ENCODE measurements at regions of chr3 and their contacts with region 1.

Region 1: DNA sequence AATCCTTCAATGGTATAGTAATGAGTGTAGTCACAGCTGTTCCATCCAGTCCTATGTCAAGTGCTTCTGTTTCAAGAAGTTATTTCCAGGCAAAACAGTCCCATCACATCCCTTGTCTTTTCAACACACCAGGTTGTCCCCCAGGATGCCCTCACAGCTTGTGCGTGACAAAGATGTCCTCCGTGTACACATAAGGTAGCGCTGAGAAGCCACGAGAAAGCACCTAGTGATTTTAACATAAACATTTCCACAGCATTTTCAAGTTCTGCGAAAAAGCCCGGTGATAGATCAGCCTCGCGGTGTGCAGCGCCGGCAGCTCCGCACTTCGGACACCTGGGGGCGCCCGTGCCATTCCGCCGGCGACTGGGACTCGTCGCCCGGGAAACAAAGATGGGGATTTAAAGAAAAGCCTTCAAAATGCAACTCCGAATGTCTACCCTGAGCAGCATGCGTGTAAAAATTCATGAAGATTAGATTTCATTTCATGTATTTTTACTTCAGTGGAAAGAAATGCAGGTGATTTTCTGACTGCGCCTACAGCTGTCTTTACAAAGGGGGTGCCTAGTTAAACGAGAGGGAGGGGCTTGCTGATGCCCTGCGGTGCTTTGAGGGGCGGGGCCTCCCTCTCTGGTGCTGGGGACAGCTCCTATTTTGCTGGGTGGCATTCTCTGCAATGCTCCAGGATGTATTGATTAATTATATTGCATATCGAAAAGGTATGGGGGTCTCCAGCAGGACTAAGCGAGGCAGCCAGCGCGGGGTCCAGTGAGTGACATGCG is 49.9 kb downstream of the KY start:
- DNase-seq: peak; percentile 28
- ATAC-seq: peak; percentile 94
- H3K4me3 ChIP-seq: no peak overlapping the region
- H3K27ac ChIP-seq: no peak overlapping the region
- H3K4me1 ChIP-seq: peaks cover 0 to 5% of the 10 kb centered on the region in 2 experiments; a peak in 1 of 4 replicates
- H3K27me3 ChIP-seq: peaks cover 11% of the 10 kb centered on the region; the same call in 1 of the 2 replicates
- CTCF ChIP-seq: peak; percentile 89 to 98 (median 93)
- POLR2A ChIP-seq: no peak
- RAD21 ChIP-seq: peak; percentile 94

Region 2: GRCh38 chr3:134677196-134677986 is 76.5 kb after region 1 on chr3:
- CTCF ChIA-PET with region 1: no interaction called
- POLR2A ChIA-PET with region 1: no interaction called
- RAD21 ChIA-PET with region 1: no interaction called
- intact Hi-C with region 1: loop called (anchors 1 kb)
- DNase-seq: peak; percentile 16
- ATAC-seq: peak; percentile 99
- H3K4me3 ChIP-seq: no peak overlapping the region
- H3K27ac ChIP-seq: no peak overlapping the region
- H3K4me1 ChIP-seq: no peaks in the 10 kb centered on the region
- H3K27me3 ChIP-seq: peaks cover 10% of the 10 kb centered on the region; the same call in 1 of the 2 replicates
- CTCF ChIP-seq: peak; percentile 84 to 94 (median 85)
- POLR2A ChIP-seq: no peak
- RAD21 ChIP-seq: peak; percentile 65

Region 3: GRCh38 chr3:134709561-134710312 is 108.9 kb after region 1 on chr3:
- CTCF ChIA-PET with region 1: no interaction called
- POLR2A ChIA-PET with region 1: no interaction called
- RAD21 ChIA-PET with region 1: no interaction called
- intact Hi-C with region 1: no loop called
- DNase-seq: no peak
- ATAC-seq: no peak
- H3K4me3 ChIP-seq: no peak overlapping the region
- H3K27ac ChIP-seq: no peak overlapping the region
- H3K4me1 ChIP-seq: peaks cover 0 to 5% of the 10 kb centered on the region in 2 experiments; a peak in 2 of 4 replicates
- H3K27me3 ChIP-seq: peaks cover 11% of the 10 kb centered on the region; the same call in 1 of the 2 replicates
- CTCF ChIP-seq: no peak
- POLR2A ChIP-seq: no peak
- RAD21 ChIP-seq: no peak

Region 4: GRCh38 chr3:135503760-135504686 is 903.1 kb after region 1 on chr3:
- CTCF ChIA-PET with region 1: no interaction called
- POLR2A ChIA-PET with region 1: no interaction called
- RAD21 ChIA-PET with region 1: no interaction called
- intact Hi-C with region 1: loop called (anchors 5 kb)
- DNase-seq: peak; percentile 28
- ATAC-seq: peak; percentile 100
- H3K4me3 ChIP-seq: no peak overlapping the region
- H3K27ac ChIP-seq: no peak overlapping the region
- H3K4me1 ChIP-seq: no peaks in the 10 kb centered on the region
- H3K27me3 ChIP-seq: peaks cover 46% of the 10 kb centered on the region
- CTCF ChIP-seq: peak; percentile 54 to 85 (median 82); a peak in 5 of 6 replicates
- POLR2A ChIP-seq: no peak
- RAD21 ChIP-seq: peak; percentile 84

Region 5: DNA sequence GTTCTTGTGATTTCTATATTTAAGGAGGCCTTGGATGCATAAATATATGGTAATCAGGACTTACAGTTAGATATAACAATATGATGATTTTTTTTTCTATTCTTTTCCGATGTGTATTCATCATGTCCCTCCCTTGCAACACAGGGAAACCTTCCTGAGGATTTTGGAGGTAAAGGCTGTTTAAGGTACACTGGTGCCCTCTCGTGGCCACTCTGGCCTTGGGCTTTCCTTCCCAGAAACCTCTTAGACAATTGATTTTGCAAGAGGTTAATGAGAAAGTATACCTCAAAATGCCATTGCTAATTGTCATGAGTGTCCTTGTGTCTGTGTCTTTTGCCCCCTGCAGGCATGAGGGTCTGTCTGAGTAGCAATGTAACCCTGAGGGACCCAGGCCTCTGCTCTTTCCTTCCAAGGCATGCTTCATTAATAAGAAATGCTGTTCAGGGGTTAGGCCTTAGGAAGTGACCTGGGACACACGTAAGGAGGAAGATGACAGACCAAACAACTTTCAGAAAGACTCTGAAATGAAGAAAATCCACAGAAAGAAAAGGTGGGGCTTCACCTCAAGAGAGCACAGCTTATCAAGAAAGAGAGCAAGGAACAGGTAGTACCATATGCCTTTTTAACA is 1294.3 kb after region 1 on chr3:
- CTCF ChIA-PET with region 1: no interaction called
- POLR2A ChIA-PET with region 1: no interaction called
- RAD21 ChIA-PET with region 1: no interaction called
- intact Hi-C with region 1: loop called (anchors 1 kb)
- DNase-seq: peak; percentile 72
- ATAC-seq: peak; percentile 79
- H3K4me3 ChIP-seq: no peak overlapping the region
- H3K27ac ChIP-seq: no peak overlapping the region
- H3K4me1 ChIP-seq: peaks cover 0 to 10% of the 10 kb centered on the region in 2 experiments; a peak in 1 of 4 replicates
- H3K27me3 ChIP-seq: no peaks in the 10 kb centered on the region
- CTCF ChIP-seq: peak; percentile 70 to 94 (median 90)
- POLR2A ChIP-seq: no peak
- RAD21 ChIP-seq: peak; percentile 91

Measured in HCT116 (cell line).